ENCODE measurements at regions of chr10 and their contacts with region 1.

Region 1: GRCh38 chr10:91745074-91745832 is 53.0 kb upstream of the TNKS2 start:
- DNase-seq: peak; percentile 76
- H3K4me3 Mint-ChIP-seq: no peak overlapping the region
- H3K27ac Mint-ChIP-seq: no peak overlapping the region
- H3K4me1 Mint-ChIP-seq: no peaks in the 10 kb centered on the region
- H3K27me3 Mint-ChIP-seq: peaks cover 48% of the 10 kb centered on the region
- CTCF ChIP-seq: peak; percentile 59

Region 2: GRCh38 chr10:91493313-91493712 is 251.9 kb before region 1 on chr10:
- CTCF ChIA-PET with region 1: interaction called, 11 read pairs
- POLR2A ChIA-PET with region 1: no interaction called
- intact Hi-C with region 1: loop called (anchors 1 kb)
- DNase-seq: peak; percentile 43
- H3K4me3 Mint-ChIP-seq: no peak overlapping the region
- H3K27ac Mint-ChIP-seq: no peak overlapping the region
- H3K4me1 Mint-ChIP-seq: no peaks in the 10 kb centered on the region
- H3K27me3 Mint-ChIP-seq: no peaks in the 10 kb centered on the region
- CTCF ChIP-seq: peak; percentile 36

Region 3: GRCh38 chr10:91551856-91552255 is 193.4 kb before region 1 on chr10:
- CTCF ChIA-PET with region 1: interaction called, 5 read pairs
- POLR2A ChIA-PET with region 1: no interaction called
- intact Hi-C with region 1: loop called (anchors 1 kb)
- DNase-seq: peak; percentile 45
- H3K4me3 Mint-ChIP-seq: no peak overlapping the region
- H3K27ac Mint-ChIP-seq: no peak overlapping the region
- H3K4me1 Mint-ChIP-seq: peaks cover 17% of the 10 kb centered on the region
- H3K27me3 Mint-ChIP-seq: no peaks in the 10 kb centered on the region
- CTCF ChIP-seq: peak; percentile 35

Region 4: DNA sequence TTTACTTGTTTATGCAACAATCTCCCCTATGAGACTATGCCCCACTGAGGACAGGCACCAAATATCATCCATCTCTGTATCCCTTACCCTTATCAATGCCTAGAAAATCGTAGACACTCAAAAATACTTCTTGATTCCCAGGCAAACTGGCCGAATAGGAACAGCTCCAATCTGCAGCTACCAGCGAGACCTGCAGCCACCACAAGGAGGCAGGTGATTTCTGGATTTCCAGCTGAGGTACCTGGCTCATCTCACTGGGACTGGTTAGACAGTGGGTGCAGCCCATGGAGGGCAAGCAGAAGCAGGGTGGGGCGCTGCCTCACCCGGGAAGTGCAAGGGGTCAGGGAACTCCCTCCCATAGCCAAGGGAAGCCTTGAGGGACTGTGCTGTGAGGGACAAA is 101.6 kb before region 1 on chr10:
- CTCF ChIA-PET with region 1: interaction called, 4 read pairs
- POLR2A ChIA-PET with region 1: interaction called, 3 read pairs
- intact Hi-C with region 1: loop called (anchors 2 kb)
- DNase-seq: peak; percentile 55
- H3K4me3 Mint-ChIP-seq: no peak overlapping the region
- H3K27ac Mint-ChIP-seq: no peak overlapping the region
- H3K4me1 Mint-ChIP-seq: peaks cover 18% of the 10 kb centered on the region
- H3K27me3 Mint-ChIP-seq: no peaks in the 10 kb centered on the region
- CTCF ChIP-seq: peak; percentile 24

Region 5: DNA sequence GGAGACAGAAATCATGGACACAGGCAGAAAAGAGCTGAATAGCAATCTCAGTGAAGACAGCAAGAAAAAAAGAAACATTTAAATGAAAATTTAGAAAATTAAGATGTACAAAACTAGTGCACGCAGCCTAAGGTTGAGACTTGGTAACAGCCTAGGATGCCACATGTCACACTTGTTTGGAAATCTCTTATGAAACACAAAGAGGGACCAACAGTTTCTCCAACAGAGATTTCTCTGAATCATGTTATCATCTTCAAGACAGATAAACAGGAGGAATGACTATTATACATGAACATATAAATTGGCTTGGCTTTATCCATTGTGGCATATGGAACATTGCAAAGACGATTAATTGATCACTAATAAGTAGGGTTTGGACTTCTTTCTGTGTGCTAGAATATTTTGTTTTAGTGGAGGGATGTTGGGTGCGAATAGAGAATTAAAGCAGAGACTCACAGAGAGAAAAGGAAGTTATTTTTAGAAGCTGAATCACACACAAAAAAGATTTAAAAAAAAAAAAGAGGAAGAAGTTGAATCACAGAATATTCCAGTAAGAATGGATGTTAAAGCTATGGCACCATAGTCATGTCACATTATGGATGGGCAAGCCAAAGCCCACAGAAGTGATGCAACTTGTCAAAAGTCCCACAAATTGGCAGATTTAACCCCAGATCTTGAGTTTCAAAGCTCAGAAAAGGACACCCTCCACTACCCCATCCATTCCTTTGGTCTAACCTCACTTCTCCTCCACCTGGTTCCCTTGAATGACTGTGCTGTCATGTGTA is 1645.2 kb after region 1 on chr10:
- CTCF ChIA-PET with region 1: no interaction called
- POLR2A ChIA-PET with region 1: no interaction called
- intact Hi-C with region 1: no loop called
- DNase-seq: no peak
- H3K4me3 Mint-ChIP-seq: no peak overlapping the region
- H3K27ac Mint-ChIP-seq: no peak overlapping the region
- H3K4me1 Mint-ChIP-seq: no peaks in the 10 kb centered on the region
- H3K27me3 Mint-ChIP-seq: no peaks in the 10 kb centered on the region
- CTCF ChIP-seq: no peak

Measured in MCF 10A (cell line).